Prostate gland (tissue), 2 donors: ENCODE measurements at regions of chr7 and their contacts with region 1.

Region 1: DNA sequence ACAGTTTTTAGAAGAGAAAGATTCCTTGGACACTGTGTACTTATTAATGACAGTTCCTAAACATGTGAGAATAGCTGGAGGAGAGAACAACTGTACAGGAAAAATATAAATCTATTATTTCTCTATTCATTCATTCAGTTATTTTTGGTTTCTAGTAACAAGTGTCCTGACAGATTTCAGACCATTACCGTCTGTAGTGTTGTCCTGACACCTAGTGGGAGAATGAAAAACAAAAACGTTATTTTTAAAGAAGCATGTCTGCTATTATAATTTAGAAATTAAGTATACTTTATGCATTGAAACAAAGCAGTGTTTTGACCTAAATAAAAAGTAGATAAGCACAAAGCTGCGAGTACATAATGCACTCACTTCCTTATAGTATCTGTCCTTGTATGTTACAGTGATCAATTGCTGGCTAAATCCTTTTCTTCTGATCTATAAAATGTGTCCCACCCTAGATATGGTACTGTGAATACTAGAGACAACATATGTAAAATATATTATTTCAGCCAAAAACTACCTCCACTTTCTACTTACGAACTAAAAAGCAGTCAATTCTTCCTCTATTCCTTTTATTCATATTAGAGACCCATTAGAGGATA is 575.6 kb downstream of the ARL4A start:
- DNase-seq: no peak
- H3K4me3 ChIP-seq: no peak overlapping the region
- H3K27ac ChIP-seq: no peak overlapping the region
- H3K4me1 ChIP-seq: no peaks in the 10 kb centered on the region
- H3K27me3 ChIP-seq: no peaks in the 10 kb centered on the region
- CTCF ChIP-seq: peak; percentile 19 to 77 (median 67)
- POLR2A ChIP-seq: no peak

Region 2: GRCh38 chr7:12524794-12525386 is 738.1 kb before region 1 on chr7:
- intact Hi-C with region 1: loop called (anchors 2 kb)
- DNase-seq: no peak
- H3K4me3 ChIP-seq: no peak overlapping the region
- H3K27ac ChIP-seq: no peak overlapping the region
- H3K4me1 ChIP-seq: no peaks in the 10 kb centered on the region
- H3K27me3 ChIP-seq: no peaks in the 10 kb centered on the region
- CTCF ChIP-seq: peak; percentile 9 to 80 (median 68)
- POLR2A ChIP-seq: no peak

Region 3: DNA sequence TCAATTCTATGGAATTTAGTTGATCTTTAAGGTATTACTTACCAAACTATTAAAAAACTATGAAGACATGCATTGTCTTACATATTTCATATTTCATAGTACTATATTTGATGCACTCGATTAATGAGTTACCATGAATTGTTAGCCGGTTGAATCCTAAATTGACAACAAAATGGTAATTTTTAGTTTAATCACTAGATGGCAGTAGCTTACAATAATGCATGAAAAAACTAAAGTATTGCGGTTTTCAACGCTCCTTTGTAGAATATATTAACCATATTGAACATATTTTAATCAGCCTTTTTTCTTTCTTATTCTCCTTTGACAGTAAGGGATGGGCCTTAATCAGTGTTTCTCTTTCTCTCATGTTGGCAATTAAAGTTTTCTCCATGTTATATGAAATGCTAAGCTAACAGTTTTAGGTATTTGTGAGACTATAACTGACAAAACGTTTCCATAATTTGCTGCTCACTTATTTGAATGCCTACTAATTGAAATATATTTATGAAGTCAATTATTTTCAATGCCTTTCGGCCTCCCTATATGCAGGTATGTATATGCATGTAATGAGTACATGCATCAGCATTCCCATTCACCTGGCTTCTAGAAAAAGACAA is 624.1 kb before region 1 on chr7:
- intact Hi-C with region 1: loop called (anchors 2 kb)
- DNase-seq: no peak
- H3K4me3 ChIP-seq: no peak overlapping the region
- H3K27ac ChIP-seq: no peak overlapping the region
- H3K4me1 ChIP-seq: peaks cover 5% of the 10 kb centered on the region
- H3K27me3 ChIP-seq: no peaks in the 10 kb centered on the region
- CTCF ChIP-seq: peak in 3 of 4 experiments; percentile 52 to 65 (median 63)
- POLR2A ChIP-seq: no peak

Region 4: GRCh38 chr7:13017333-13017853 is 245.6 kb before region 1 on chr7:
- intact Hi-C with region 1: no loop called
- DNase-seq: no peak
- H3K4me3 ChIP-seq: no peak overlapping the region
- H3K27ac ChIP-seq: no peak overlapping the region
- H3K4me1 ChIP-seq: no peaks in the 10 kb centered on the region
- H3K27me3 ChIP-seq: no peaks in the 10 kb centered on the region
- CTCF ChIP-seq: no peak
- POLR2A ChIP-seq: no peak

Region 5: GRCh38 chr7:13189668-13190067 is 73.4 kb before region 1 on chr7:
- intact Hi-C with region 1: no loop called
- DNase-seq: no peak
- H3K4me3 ChIP-seq: no peak overlapping the region
- H3K27ac ChIP-seq: no peak overlapping the region
- H3K4me1 ChIP-seq: no peaks in the 10 kb centered on the region
- H3K27me3 ChIP-seq: no peaks in the 10 kb centered on the region
- CTCF ChIP-seq: no peak
- POLR2A ChIP-seq: no peak